GM23248 (cell line): ENCODE measurements at regions of chr18 and their contacts with region 1.

Region 1: GRCh38 chr18:596288-596881 is 403 bp upstream of the CLUL1 start:
- DNase-seq: peak; percentile 35
- H3K4me3 ChIP-seq: no peak overlapping the region
- H3K27ac ChIP-seq: no peak overlapping the region
- H3K4me1 ChIP-seq: no peaks in the 10 kb centered on the region
- H3K27me3 ChIP-seq: peaks cover 48% of the 10 kb centered on the region

Region 2: DNA sequence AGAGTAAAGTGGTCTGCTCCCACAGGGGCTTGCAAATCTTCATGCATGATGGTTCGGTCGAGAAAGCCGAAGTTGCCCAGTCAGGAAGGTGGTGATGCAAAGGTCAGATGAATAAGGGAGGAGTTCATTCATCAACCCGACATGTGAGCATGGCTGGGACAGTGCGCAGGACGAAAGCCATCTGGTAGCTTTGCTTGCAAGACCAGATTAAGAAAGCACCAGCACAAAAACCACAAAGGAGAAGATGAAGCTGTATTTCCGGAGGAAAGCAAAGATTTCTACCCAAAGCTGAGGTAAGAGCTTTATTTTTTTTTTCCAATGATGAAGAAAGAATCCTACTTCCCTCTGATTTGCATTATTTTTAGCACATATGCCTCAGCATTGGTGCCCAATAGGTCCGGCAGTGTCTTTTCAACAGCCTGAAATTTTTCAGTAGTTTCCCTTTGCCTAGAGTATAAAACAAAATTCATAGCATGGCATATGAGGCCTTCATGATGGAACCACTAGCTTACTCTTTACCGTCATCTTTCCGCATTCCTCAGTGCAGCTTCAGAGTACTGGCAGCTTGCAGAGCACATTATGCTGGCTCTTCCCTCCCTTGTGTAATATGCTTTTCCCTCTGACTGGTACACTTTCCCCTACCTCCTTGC is 216.6 kb before region 1 on chr18:
- in situ Hi-C with region 1: no loop called
- DNase-seq: no peak
- H3K4me3 ChIP-seq: no peak overlapping the region
- H3K27ac ChIP-seq: no peak overlapping the region
- H3K4me1 ChIP-seq: 0 out of 2 replicates have a peak, but pooled peaks cover 5% of the 10 kb centered on the region
- H3K27me3 ChIP-seq: no peaks in the 10 kb centered on the region

Region 3: DNA sequence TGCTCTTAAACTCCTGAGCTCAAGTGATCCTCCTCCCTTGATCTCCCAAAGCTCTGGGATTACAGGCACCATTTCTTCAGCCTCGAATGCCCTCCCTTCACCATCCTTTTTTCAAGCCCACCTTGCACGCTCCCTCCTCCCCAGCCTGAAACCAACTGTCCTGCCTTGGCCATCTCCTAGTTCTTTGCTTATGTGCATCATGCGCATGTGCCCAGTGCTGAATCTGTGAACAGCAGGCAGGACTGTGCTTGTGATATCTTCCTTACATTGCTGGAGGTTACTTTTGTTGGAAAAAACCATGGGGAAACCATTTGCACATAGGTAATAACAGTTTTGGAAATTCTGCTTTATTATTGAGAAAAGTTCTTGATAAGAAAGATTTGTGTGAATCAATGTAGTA is 46.4 kb before region 1 on chr18:
- in situ Hi-C with region 1: loop called (anchors 5 kb)
- DNase-seq: no peak
- H3K4me3 ChIP-seq: no peak overlapping the region
- H3K27ac ChIP-seq: no peak overlapping the region
- H3K4me1 ChIP-seq: no peaks in the 10 kb centered on the region
- H3K27me3 ChIP-seq: 0 out of 2 replicates have a peak, but pooled peaks cover 7% of the 10 kb centered on the region